GM12878 (cell line): ENCODE measurements at regions of chr17 and their contacts with region 1.

Region 1: DNA sequence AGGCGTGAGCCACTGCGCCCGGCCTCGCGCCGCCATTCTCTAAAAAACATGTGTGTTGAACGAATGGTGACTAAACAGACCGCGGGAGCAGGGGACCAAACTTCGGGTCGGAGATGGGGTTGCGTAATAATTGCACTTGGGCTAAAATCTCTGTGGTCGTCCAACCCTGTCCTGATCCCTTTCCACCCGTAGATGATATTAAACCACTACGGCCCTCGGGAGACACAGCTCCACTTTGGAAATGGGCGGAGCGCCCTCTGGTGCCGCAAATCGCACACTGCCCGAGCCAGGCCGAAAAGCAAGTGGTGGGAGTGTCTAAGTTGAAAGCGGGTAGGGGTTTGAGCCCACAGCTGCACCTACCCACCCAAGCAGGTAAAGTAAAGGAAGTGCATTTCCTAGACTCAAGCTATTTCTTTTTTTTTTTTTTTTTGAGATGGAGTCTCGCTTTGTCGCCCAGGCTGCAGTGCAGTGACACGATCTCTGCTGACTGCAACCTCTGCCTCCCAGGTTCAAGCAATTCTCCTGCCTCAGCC is 17.0 kb downstream of the CAVIN1 start:
- DNase-seq: no peak
- ATAC-seq: peak; percentile 84
- H3K4me3 ChIP-seq: no peak overlapping the region
- H3K27ac ChIP-seq: no peak overlapping the region
- H3K4me1 ChIP-seq: peaks cover 4% of the 10 kb centered on the region; the same call in 1 of the 2 replicates
- H3K27me3 ChIP-seq: no peaks in the 10 kb centered on the region
- CTCF ChIP-seq: peak; percentile 91 to 94 (median 91)
- EP300 ChIP-seq: no peak
- POLR2A ChIP-seq: no peak
- RAD21 ChIP-seq: peak; percentile 97

Region 2: GRCh38 chr17:42221937-42222745 is 183.9 kb before region 1 on chr17:
- CTCF ChIA-PET with region 1: interaction called, 79 read pairs
- POLR2A ChIA-PET with region 1: interaction called, 5 read pairs
- RAD21 ChIA-PET with region 1: interaction called, 33 read pairs
- SMC1A ChIA-PET with region 1: interaction called, 13 read pairs
- in situ Hi-C with region 1: no loop called
- intact Hi-C with region 1: loop called (anchors 10 kb)
- DNase-seq: no peak
- ATAC-seq: peak; percentile 87
- H3K4me3 ChIP-seq: no peak overlapping the region
- H3K27ac ChIP-seq: no peak overlapping the region
- H3K4me1 ChIP-seq: no peaks in the 10 kb centered on the region
- H3K27me3 ChIP-seq: no peaks in the 10 kb centered on the region
- CTCF ChIP-seq: peak; percentile 67 to 76 (median 70)
- EP300 ChIP-seq: no peak
- POLR2A ChIP-seq: no peak
- RAD21 ChIP-seq: peak; percentile 74

Region 3: GRCh38 chr17:42322382-42323267 is 83.4 kb before region 1 on chr17:
- CTCF ChIA-PET with region 1: interaction called, 732 read pairs
- POLR2A ChIA-PET with region 1: interaction called, 7 read pairs
- RAD21 ChIA-PET with region 1: interaction called, 373 read pairs
- SMC1A ChIA-PET with region 1: interaction called, 528 read pairs
- in situ Hi-C with region 1: loop called (anchors 5 kb)
- intact Hi-C with region 1: loop called (anchors 1 kb)
- DNase-seq: peak; percentile 61
- ATAC-seq: peak; percentile 99
- H3K4me3 ChIP-seq: no peak overlapping the region
- H3K27ac ChIP-seq: peak overlapping the region; percentile 40
- H3K4me1 ChIP-seq: peaks cover 18% of the 10 kb centered on the region
- H3K27me3 ChIP-seq: no peaks in the 10 kb centered on the region
- CTCF ChIP-seq: peak; percentile 99 to 100 (median 100); a peak in 5 of 6 replicates
- EP300 ChIP-seq: peak in 1 of 2 experiments; percentile 14; a peak in 1 of 4 replicates
- POLR2A ChIP-seq: peak; percentile 32; the same call in 1 of the 2 replicates
- RAD21 ChIP-seq: peak; percentile 99

Region 4: DNA sequence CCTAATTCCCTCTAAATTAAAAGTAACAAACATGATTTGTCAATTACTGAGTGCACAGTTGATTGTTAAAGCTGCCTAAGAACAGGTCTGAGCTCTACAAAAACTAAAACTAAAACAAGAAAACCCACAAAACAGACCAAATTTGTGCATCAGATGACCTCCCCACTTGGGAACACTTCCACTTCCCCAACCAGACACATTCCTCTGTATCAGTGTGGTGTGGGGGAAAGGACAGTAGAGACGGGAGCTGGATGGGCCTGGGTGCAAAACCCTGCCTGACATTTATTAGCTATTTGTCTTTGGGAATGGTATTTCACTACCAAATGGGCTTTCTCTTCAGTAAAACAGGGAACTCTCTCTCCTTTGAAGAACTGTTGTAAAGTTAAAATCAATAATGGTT is 47.6 kb before region 1 on chr17:
- CTCF ChIA-PET with region 1: interaction called, 7 read pairs
- POLR2A ChIA-PET with region 1: no interaction called
- RAD21 ChIA-PET with region 1: interaction called, 8 read pairs
- SMC1A ChIA-PET with region 1: interaction called, 10 read pairs
- in situ Hi-C with region 1: no loop called
- intact Hi-C with region 1: no loop called
- DNase-seq: no peak
- ATAC-seq: peak; percentile 28
- H3K4me3 ChIP-seq: peak overlapping the region; percentile 31; the same call in 1 of the 2 replicates
- H3K27ac ChIP-seq: peak overlapping the region; percentile 54
- H3K4me1 ChIP-seq: peaks cover 38% of the 10 kb centered on the region
- H3K27me3 ChIP-seq: no peaks in the 10 kb centered on the region
- CTCF ChIP-seq: no peak
- EP300 ChIP-seq: no peak
- POLR2A ChIP-seq: no peak
- RAD21 ChIP-seq: no peak

Region 5: DNA sequence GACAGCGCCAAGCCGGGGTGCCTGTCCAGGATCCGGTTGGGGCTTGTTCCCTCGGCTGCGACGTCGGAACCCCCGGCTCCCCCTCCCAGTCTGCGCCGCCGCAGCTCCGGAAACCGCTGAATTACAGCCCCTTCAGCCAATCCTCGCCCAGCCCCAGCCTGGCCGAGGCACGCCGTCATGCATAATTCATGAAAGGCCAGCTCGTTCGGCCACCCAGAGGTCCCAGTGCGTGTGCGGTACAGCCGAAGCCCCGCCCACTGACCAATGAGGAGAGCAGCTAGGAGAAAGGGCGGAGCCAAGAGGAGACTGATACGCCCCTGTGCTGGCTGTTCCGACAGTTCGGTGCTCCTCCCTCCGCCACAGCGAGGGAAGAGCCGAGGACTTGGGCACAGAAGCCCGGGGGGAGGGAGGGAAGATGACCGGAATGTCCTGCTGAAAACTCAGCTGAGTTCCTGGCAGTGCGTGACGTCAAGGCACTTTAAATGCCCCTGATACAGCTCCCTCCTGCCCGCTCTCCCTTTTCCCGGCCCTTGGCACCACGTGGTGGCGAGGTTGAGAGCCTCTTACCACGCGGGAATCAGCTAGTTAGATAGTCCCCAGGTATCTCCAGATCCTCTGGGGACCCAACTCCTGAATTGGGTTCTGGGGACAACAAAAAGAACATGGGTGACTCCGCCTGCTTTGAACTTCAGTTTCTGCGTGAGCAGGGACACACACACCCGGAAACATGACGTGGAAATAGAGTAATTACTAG is 17.5 kb before region 1 on chr17 and contains the start of gene STAT3:
- CTCF ChIA-PET with region 1: interaction called, 36 read pairs
- POLR2A ChIA-PET with region 1: interaction called, 4 read pairs
- RAD21 ChIA-PET with region 1: interaction called, 23 read pairs
- SMC1A ChIA-PET with region 1: interaction called, 32 read pairs
- in situ Hi-C with region 1: no loop called
- intact Hi-C with region 1: no loop called
- DNase-seq: peak; percentile 100
- ATAC-seq: peak; percentile 95
- H3K4me3 ChIP-seq: peak within 1 kb of the TSS; percentile 91
- H3K27ac ChIP-seq: peak within 1 kb of the TSS; percentile 97
- H3K4me1 ChIP-seq: peaks cover 17% of the 10 kb centered on the region
- H3K27me3 ChIP-seq: no peaks in the 10 kb centered on the region
- CTCF ChIP-seq: 0 out of 6 replicates have a peak, but pooled peaks of 1 of the 3 experiments have one; percentile 3
- EP300 ChIP-seq: peak; percentile 89 to 100
- POLR2A ChIP-seq: peak; percentile 92
- RAD21 ChIP-seq: peak; percentile 21; the same call in 1 of the 2 replicates
- polyA plus RNA-seq, gene STAT3: 18.4 to 18.9 TPM

Region 6: DNA sequence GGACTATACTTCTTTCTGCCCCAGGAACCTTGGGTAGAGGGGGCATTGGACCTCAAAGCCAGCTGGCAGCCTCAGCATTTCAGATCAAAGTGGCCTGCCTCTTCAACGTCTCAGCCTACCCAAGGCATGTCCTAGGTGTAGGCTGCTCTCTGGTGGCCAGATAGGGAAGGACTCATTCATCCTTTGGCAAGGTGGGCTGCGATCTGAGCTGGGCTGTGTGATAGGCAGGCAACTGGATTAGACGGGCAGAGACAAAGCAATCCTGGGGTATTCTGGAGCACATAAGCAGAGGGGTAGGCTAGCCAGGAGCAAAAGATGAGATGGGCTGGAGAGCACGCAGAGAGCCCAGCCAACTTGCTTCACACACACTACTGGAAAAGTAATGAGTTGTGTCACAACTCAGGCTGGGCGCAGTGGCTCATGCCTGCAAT is 121.3 kb after region 1 on chr17:
- CTCF ChIA-PET with region 1: interaction called, 32 read pairs
- POLR2A ChIA-PET with region 1: no interaction called
- RAD21 ChIA-PET with region 1: interaction called, 10 read pairs
- SMC1A ChIA-PET with region 1: interaction called, 5 read pairs
- in situ Hi-C with region 1: no loop called
- intact Hi-C with region 1: no loop called
- DNase-seq: peak; percentile 51
- ATAC-seq: peak; percentile 91
- H3K4me3 ChIP-seq: no peak overlapping the region
- H3K27ac ChIP-seq: no peak overlapping the region
- H3K4me1 ChIP-seq: peaks cover 22% of the 10 kb centered on the region
- H3K27me3 ChIP-seq: no peaks in the 10 kb centered on the region
- CTCF ChIP-seq: peak; percentile 86 to 93 (median 89); a peak in 5 of 6 replicates
- EP300 ChIP-seq: no peak
- POLR2A ChIP-seq: no peak
- RAD21 ChIP-seq: peak; percentile 96